ENCODE measurements at regions of chr5 and their contacts with region 1.

Region 1: GRCh38 chr5:431001-431710 is 11.8 kb upstream of the EXOC3 start:
- DNase-seq: peak; percentile 69
- H3K4me3 Mint-ChIP-seq: no peak overlapping the region
- H3K27ac Mint-ChIP-seq: no peak overlapping the region
- H3K4me1 Mint-ChIP-seq: peaks cover 5% of the 10 kb centered on the region
- H3K27me3 Mint-ChIP-seq: no peaks in the 10 kb centered on the region

Region 2: GRCh38 chr5:317086-317811 is 113.9 kb before region 1 on chr5:
- CTCF ChIA-PET with region 1: interaction called, 46 read pairs
- DNase-seq: peak; percentile 53
- H3K4me3 Mint-ChIP-seq: no peak overlapping the region
- H3K27ac Mint-ChIP-seq: peak overlapping the region; percentile 52
- H3K4me1 Mint-ChIP-seq: peaks cover 11% of the 10 kb centered on the region
- H3K27me3 Mint-ChIP-seq: peaks cover 34% of the 10 kb centered on the region

Region 3: DNA sequence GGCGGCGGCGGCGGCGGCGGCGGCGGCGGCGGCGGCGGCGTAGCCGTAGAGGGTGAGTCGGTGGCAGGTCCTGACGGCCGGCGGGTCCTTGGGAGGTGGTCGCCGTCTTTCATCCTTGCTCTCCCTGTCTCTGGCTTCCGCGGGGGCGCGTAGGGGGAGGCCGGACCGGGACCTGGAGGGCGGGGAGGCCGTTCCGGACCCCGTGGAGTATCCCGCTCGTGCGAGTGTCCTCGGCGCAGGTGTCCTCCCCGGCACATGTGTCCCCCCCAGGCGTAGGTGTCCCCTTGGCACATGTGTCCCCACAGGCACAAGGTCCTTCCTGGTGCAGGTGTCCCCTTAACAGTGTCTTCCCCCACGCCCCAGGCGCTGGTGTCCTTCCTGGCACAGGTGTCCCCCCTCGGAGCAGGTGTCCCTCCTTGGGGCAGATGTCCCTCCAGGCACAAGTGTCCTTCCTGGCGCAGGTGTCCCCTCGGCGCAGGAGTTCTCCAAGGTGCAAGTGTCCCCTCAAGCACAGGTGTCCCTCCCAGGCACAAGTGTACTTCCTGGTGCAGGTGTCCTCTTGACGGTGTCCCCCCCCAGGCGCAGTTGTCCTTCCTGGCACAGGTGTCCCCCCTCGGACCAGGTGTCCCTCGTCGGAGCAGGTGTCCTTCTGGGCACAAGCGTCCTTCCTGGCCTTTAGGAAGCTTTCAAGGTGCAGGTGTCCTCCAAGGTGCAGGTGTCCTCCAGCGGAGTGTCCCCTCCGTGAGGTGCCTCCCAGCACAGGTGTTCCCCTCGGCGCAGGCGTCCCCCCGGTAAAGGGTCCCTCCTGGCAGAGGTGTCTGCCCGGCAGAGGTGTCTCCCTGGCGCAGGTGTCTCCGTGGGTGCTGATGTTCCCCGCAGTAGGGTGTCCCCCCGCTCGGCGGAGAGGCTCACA is 12.3 kb after region 1 on chr5:
- CTCF ChIA-PET with region 1: interaction called, 17 read pairs
- DNase-seq: peak; percentile 62
- H3K4me3 Mint-ChIP-seq: peak overlapping the region; percentile 98
- H3K27ac Mint-ChIP-seq: peak overlapping the region; percentile 75
- H3K4me1 Mint-ChIP-seq: peaks cover 44% of the 10 kb centered on the region
- H3K27me3 Mint-ChIP-seq: no peaks in the 10 kb centered on the region

Measured in activated naive CD4-positive, alpha-beta T cell treated with anti-CD3 and anti-CD28 coated beads, Interleukin-2, amount 10 ng/mL, durations not matched to agents 7 days and 5 days (primary cell).